ENCODE measurements at regions of chr19 and their contacts with region 1.

Region 1: DNA sequence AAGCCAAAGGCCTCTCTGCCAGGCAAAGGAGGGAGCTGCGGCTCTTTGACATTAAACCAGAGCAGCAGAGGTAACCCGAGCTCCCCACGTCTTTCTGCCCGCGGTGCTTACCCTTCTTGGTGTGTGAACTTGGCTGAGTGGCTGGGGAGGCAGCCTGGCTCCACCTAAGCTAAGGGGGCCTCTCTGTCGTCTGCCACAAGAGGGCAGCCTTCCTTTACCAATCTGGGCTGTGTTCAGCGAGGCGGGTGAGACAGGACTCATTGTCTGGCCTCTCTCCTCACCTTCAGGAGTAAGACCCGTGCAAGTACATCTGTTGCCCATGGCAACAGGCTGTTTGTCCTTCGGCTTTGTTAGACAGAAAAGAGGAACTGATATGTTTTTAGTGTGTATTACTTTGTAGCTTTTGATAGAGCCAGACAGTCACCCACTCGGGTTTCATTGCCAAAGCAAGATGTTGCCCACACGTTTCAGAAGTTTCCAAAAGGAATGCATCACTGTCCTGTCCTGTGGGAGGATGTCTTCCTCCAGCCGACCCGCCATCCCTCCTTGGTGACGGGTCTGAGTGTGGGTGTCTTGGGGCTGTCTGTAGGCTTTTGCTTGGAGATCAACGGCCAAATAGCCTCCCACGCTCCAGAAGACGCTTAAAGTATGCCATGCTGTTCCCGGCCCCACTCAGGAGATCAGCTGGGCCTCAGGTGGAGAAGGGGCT is 4.6 kb downstream of the POP4 start:
- DNase-seq: peak; percentile 89 to 96
- ATAC-seq: peak; percentile 77 to 90
- H3K4me3 ChIP-seq: no peak overlapping the region
- H3K27ac ChIP-seq: no peak overlapping the region
- H3K4me1 ChIP-seq: peaks cover 7% of the 10 kb centered on the region; the same call in 1 of the 3 replicates
- CTCF ChIP-seq: peak; percentile 98
- EP300 ChIP-seq: no peak
- POLR2A ChIP-seq: no peak
- RAD21 ChIP-seq: peak; percentile 91 to 98

Region 2: GRCh38 chr19:27793644-27794493 is 1816.8 kb before region 1 on chr19:
- CTCF ChIA-PET with region 1: no interaction called
- POLR2A ChIA-PET with region 1: interaction called, 20 read pairs
- DNase-seq: peak; percentile 99
- ATAC-seq: peak; percentile 93 to 97
- H3K4me3 ChIP-seq: peak overlapping the region; percentile 81
- H3K27ac ChIP-seq: peak overlapping the region; percentile 89
- H3K4me1 ChIP-seq: peaks cover 8% of the 10 kb centered on the region; the same call in 1 of the 3 replicates
- CTCF ChIP-seq: no peak
- EP300 ChIP-seq: no peak
- POLR2A ChIP-seq: peak; percentile 92
- RAD21 ChIP-seq: no peak

Region 3: GRCh38 chr19:29596885-29597525 is 13.7 kb before region 1 on chr19:
- CTCF ChIA-PET with region 1: interaction called, 141 read pairs
- POLR2A ChIA-PET with region 1: interaction called, 33 read pairs
- DNase-seq: peak in 1 of 2 experiments; percentile 64
- ATAC-seq: peak; percentile 69 to 70; a peak in 5 of 6 replicates
- H3K4me3 ChIP-seq: no peak overlapping the region
- H3K27ac ChIP-seq: no peak overlapping the region
- H3K4me1 ChIP-seq: no peaks in the 10 kb centered on the region
- CTCF ChIP-seq: peak; percentile 76
- EP300 ChIP-seq: no peak
- POLR2A ChIP-seq: no peak
- RAD21 ChIP-seq: peak; percentile 81 to 83

Region 4: DNA sequence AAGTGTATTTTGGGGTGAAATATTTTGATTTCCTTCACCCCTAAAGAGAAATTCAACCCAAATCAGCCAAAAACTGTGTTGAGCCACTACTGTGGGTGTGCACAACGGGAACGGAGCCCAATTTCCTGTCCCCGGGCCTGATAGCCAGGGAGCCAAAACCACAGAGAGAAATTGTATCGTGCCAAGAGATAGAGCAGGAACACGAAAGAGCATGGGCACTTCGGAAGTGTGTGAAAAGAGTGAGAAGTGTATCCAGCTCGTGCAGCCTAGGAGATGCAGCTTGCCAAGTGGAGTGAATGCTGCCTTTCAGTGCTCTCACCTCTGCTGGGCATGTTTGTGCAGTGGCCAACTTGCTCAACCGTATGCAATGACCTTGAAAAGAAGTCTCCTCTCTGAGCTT is 35.2 kb after region 1 on chr19:
- CTCF ChIA-PET with region 1: interaction called, 43 read pairs
- POLR2A ChIA-PET with region 1: interaction called, 5 read pairs
- DNase-seq: no peak
- ATAC-seq: peak; percentile 32 to 48; a peak in 4 of 6 replicates
- H3K4me3 ChIP-seq: no peak overlapping the region
- H3K27ac ChIP-seq: no peak overlapping the region
- H3K4me1 ChIP-seq: no peaks in the 10 kb centered on the region
- CTCF ChIP-seq: no peak
- EP300 ChIP-seq: no peak
- POLR2A ChIP-seq: no peak
- RAD21 ChIP-seq: no peak

Region 5: DNA sequence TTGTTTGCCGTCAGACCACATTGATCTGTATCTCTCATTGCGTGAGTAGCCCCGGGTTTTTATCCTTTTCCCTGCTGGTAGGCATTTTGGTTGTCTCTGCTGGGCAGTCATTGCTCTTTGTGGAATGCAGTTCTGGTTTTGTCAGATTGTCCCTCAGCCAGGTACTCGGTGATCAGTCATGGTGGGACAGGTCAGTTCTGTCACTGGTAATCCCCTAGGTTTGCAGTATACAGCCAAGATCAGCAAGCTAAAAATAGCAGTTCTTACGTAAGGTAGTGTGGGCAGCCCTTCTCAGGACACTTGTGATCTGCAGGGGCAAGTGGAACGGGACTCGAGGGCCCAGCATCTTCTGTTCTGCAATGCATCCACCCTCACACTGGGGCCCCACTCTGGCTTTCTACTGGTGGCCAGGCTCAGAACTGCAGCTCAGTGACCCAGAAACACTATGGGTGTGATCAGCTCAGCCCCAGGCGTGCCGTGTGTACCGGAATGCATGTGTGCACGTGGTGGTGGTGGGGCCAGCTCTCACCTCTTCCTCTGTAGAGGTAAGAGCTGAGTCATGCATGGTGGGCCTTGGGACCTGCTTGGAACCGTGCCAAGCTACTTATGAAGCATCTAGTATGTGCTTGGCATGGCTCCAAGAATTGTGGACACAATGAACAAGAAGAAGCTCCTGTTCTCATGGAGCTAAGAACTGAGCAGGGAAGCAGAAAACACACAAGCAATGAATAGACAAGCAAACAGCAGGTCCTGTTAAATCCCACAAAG is 60.9 kb after region 1 on chr19:
- CTCF ChIA-PET with region 1: interaction called, 122 read pairs
- POLR2A ChIA-PET with region 1: interaction called, 51 read pairs
- DNase-seq: peak in 1 of 2 experiments; percentile 56
- ATAC-seq: peak in 1 of 2 experiments; percentile 49; a peak in 3 of 6 replicates
- H3K4me3 ChIP-seq: no peak overlapping the region
- H3K27ac ChIP-seq: no peak overlapping the region
- H3K4me1 ChIP-seq: peaks cover 6% of the 10 kb centered on the region; the same call in 1 of the 3 replicates
- CTCF ChIP-seq: no peak
- EP300 ChIP-seq: no peak
- POLR2A ChIP-seq: no peak
- RAD21 ChIP-seq: no peak

Region 6: DNA sequence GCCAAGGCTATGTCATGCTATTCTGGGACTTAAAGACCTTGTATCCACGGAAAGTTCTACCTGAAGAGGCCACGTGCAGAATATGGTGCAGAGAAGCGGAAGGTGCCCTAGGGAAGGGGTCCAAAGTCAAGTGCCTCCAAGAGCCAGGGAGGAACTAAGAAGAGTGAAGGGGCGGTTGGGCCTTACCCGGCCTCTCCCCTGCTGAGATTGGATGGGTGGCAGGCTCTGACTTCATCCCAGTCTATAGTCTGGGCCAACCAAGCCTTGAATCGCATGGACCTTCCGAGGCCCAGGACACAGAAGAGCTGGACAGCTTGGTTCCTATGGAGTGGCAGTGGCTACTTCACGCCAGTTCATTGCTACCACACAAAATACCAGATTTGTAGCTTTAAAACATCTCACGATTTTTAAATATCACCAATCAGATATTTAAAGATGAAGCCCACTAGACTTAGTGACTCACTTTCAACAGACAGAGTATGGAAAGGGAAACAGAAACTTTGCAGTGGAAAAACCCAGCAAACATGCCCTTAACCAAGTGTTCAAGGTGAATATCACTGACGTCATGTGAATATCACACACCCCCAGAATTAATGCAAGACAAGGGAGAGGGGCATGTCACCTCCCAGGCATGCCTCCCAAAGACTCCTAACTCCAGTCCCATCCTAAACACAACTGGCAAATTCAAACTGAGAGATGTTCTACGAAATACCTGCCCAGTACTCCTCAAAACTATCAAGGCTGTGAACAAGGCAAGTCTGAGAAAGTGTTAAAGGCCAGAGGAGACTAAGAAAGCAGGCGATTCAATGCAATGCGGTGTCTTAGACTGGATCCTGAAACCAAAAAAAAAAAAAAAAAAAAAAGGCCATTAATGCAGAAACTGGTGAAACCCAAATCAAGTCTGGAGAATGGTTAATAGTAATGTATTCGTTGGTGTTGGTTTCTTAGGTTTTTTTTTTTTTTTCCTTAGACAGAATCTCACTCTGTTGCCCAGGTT is 94.1 kb after region 1 on chr19:
- CTCF ChIA-PET with region 1: interaction called, 490 read pairs
- POLR2A ChIA-PET with region 1: interaction called, 4 read pairs
- DNase-seq: no peak
- ATAC-seq: no peak
- H3K4me3 ChIP-seq: no peak overlapping the region
- H3K27ac ChIP-seq: no peak overlapping the region
- H3K4me1 ChIP-seq: no peaks in the 10 kb centered on the region
- CTCF ChIP-seq: no peak
- EP300 ChIP-seq: no peak
- POLR2A ChIP-seq: no peak
- RAD21 ChIP-seq: no peak

Region 7: DNA sequence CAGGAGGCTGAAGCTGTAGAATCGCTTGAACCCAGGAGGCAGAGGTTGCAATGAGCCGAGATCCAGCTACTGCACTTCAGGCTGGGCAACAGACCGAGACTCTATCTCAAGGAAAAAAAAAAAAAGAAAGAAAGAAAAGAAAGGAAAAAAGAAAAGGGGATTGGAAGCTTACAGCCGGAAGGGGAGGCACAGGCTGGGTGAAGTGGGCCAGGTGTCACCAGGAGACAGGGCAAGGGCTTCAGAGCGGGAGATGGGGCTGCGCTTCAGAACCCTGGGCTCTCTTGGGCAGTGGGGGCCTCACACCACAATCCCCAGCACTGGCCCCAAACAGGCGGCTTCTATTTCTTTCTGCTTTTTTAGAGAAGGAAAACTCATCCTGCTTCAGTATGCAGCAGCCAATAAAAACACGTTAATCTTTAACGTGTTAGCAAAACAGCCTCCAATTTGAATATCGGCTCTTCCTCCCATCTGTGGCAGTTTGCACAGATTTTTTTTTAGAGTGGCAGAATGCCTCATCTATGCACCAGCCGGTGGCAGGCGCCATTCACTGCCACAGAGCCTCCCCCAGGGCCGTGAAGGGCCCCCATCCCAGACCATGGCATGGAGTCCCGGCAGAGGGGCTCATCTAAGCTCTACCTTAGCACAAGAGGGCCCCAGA is 151.0 kb after region 1 on chr19:
- CTCF ChIA-PET with region 1: interaction called, 10 read pairs
- POLR2A ChIA-PET with region 1: no interaction called
- DNase-seq: no peak
- ATAC-seq: no peak
- H3K4me3 ChIP-seq: no peak overlapping the region
- H3K27ac ChIP-seq: no peak overlapping the region
- H3K4me1 ChIP-seq: no peaks in the 10 kb centered on the region
- CTCF ChIP-seq: no peak
- EP300 ChIP-seq: no peak
- POLR2A ChIP-seq: no peak
- RAD21 ChIP-seq: no peak

Region 8: GRCh38 chr19:30066781-30067759 is 456.4 kb after region 1 on chr19:
- CTCF ChIA-PET with region 1: no interaction called
- POLR2A ChIA-PET with region 1: no interaction called
- DNase-seq: no peak
- ATAC-seq: no peak
- H3K4me3 ChIP-seq: no peak overlapping the region
- H3K27ac ChIP-seq: no peak overlapping the region
- H3K4me1 ChIP-seq: no peaks in the 10 kb centered on the region
- CTCF ChIP-seq: no peak
- EP300 ChIP-seq: no peak
- POLR2A ChIP-seq: no peak
- RAD21 ChIP-seq: no peak

Measured in A549 (cell line).